ENCODE measurements at regions of chr7 and their contacts with region 1.

Region 1: GRCh38 chr7:157016352-157017041 is 6.0 kb upstream of the MNX1 start:
- DNase-seq: peak; percentile 73
- H3K4me3 Mint-ChIP-seq: no peak overlapping the region
- H3K27ac Mint-ChIP-seq: no peak overlapping the region
- H3K4me1 Mint-ChIP-seq: peaks cover 16% of the 10 kb centered on the region
- H3K27me3 Mint-ChIP-seq: peaks cover 77% of the 10 kb centered on the region

Region 2: DNA sequence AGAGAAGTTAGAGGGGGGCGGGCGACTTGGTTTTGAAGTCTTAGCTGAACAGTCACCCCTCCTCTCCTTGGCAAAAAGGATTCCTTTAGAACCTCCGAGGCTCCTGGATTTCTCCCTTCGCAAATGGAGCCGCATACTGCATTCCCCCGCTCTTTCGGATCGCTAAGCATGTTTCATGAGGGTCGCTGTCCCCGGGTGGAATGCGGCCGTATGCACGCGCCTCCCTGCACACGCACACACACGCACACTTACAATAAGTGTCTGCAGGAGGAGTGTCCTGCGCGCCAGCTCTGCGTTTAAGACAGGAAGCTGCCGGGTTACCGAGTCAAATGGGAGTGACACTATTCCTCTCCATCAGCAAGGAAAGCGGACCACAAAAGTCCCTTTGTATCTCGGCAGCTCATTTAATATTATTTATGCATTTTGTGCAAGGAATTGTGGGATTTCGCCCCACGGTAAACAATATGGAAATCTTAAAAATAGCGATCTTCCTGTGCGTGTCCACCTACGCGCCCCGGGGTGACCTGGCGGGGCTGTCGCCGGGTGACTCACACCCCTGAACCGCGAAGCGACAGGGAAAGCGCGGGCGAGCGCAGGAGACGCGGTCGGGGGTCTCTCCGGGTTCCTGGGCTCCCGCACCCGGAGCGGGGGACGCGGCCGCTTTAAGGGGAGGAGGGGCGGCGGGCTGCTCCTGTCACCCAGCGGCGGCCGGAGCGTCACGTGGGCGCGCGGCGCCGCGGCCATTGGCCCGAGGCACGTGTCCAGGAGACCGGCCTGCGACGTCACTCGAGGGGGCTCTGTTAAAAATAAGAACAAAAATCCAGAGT is 1559.5 kb before region 1 on chr7:
- intact Hi-C with region 1: loop called (anchors 5 kb)
- DNase-seq: no peak
- H3K4me3 Mint-ChIP-seq: peak overlapping the region; percentile 64
- H3K27ac Mint-ChIP-seq: peak overlapping the region; percentile 79
- H3K4me1 Mint-ChIP-seq: peaks cover 9% of the 10 kb centered on the region
- H3K27me3 Mint-ChIP-seq: peaks cover 72% of the 10 kb centered on the region

Region 3: DNA sequence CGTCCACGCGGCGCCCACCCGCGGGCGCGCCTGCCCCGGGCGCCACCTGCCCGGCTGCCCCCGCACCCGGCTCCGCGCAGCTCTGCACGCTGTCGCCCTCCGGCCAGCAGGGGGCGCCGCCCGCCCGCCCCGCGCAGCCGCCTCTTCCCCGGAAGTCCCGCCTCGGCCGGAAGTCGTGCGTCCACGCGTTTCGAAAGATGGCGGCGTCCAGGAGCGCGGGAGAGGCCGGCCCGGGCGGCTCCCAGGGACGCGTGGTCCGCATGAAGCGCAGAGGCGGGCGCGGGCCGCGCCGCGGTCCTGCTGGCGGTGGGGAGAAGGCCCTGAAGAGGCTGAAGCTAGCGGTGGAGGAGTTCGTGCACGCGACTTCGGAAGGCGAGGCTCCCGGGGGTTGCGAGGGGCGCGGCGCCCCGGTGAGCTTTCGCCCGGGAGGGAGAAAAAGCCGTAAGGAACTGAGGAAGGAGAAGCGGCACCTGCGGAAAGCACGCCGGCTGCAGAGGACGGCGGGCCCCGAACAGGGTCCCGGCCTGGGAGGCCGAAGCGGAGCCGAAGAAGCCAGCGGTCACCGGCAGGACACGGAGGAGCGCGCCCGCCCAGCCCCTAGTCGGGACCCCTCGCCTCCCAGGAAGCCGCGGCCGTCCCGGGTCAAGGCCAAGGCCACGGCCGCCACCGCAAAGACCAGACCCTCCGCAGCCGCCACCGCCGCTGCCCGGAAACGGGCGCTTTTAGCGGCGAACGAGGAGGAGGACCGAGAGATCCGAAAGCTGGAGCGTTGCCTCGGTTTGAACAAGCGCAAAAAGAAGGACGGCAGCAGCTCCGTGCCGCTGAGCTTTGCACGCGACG is 66.7 kb before region 1 on chr7 and contains the start of gene NOM1:
- intact Hi-C with region 1: no loop called
- DNase-seq: peak; percentile 98
- H3K4me3 Mint-ChIP-seq: peak within 1 kb of the TSS; percentile 100
- H3K27ac Mint-ChIP-seq: peak within 1 kb of the TSS; percentile 96
- H3K4me1 Mint-ChIP-seq: peaks cover 28% of the 10 kb centered on the region
- H3K27me3 Mint-ChIP-seq: peaks cover 16% of the 10 kb centered on the region
- total RNA-seq, gene NOM1: 50.5 and 54.5 TPM in 2 replicates

Region 4: DNA sequence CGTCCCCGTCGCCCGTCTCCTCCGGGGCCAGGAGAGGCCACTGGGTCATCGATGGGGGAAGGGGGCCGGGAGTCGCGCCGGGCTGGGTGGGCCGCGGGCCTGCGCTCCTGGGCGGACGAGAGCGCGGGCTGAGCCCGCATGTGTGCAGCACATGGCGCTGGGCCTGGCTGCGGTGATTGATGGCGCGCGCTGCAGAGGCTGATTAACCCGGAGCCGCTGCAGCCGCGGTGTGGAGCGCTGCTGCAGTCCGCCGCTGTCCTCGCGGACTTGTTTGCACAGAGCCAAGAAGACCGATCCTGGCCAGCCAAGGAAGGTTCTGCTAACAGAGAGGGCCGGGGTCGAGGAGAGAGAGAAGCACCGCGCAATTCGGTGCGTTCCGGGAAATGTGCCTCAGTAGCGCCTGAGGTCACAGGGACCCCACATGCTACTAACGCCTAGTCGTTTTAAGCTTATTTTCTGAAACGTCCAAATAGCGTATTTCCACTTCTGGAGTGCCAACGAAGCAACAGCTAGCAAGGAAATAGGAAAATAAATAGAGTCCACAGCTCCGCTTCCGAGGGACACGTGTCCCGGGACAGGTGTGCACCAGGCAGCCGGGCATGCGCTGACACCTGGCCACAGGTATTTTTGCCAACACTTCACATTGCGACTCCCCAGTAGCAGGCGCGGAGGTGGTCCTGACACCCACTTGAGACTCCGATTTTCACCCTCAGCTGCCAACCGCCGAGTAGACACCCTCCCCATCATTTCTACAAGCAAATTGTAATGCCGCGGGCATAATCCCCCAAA is 12.3 kb before region 1 on chr7:
- intact Hi-C with region 1: loop called (anchors 1 kb)
- DNase-seq: no peak
- H3K4me3 Mint-ChIP-seq: no peak overlapping the region
- H3K27ac Mint-ChIP-seq: peak overlapping the region; percentile 51
- H3K4me1 Mint-ChIP-seq: peaks cover 17% of the 10 kb centered on the region
- H3K27me3 Mint-ChIP-seq: peaks cover 66% of the 10 kb centered on the region

Region 5: DNA sequence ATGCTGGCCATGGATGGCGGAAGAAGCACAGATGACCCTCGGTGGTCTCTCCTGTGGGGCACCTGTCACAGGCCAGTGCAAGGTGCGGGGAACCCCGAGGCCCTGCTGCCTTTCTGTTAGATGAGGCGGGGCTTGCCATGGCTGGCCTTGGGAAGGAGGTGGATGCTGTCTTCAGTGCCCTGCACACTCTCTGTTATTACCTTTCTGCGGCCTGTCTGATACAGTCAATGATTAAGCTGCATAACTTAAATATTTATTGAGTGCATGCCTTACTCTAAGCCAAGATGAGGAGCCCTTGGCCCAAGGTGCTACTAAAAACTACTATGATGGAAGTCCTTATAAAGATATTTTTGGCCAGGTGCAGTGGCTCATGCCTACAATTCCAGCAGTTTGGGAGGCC is 30.7 kb after region 1 on chr7:
- intact Hi-C with region 1: no loop called
- DNase-seq: no peak
- H3K4me3 Mint-ChIP-seq: no peak overlapping the region
- H3K27ac Mint-ChIP-seq: no peak overlapping the region
- H3K4me1 Mint-ChIP-seq: no peaks in the 10 kb centered on the region
- H3K27me3 Mint-ChIP-seq: peaks cover 1% of the 10 kb centered on the region

Measured in activated CD4-positive, alpha-beta T cell treated with anti-CD3 and anti-CD28 coated beads, Interleukin-2, amount 10 ng/mL, durations not matched to agents 24 days and 14 days (primary cell).